Posterior cingulate gyrus (tissue), 11 donors: ENCODE measurements at regions of chr6 and their contacts with region 1.

Region 1: GRCh38 chr6:32195652-32195901 is 3.1 kb upstream of the GPSM3 start:
- DNase-seq: peak; percentile 100

Region 2: DNA sequence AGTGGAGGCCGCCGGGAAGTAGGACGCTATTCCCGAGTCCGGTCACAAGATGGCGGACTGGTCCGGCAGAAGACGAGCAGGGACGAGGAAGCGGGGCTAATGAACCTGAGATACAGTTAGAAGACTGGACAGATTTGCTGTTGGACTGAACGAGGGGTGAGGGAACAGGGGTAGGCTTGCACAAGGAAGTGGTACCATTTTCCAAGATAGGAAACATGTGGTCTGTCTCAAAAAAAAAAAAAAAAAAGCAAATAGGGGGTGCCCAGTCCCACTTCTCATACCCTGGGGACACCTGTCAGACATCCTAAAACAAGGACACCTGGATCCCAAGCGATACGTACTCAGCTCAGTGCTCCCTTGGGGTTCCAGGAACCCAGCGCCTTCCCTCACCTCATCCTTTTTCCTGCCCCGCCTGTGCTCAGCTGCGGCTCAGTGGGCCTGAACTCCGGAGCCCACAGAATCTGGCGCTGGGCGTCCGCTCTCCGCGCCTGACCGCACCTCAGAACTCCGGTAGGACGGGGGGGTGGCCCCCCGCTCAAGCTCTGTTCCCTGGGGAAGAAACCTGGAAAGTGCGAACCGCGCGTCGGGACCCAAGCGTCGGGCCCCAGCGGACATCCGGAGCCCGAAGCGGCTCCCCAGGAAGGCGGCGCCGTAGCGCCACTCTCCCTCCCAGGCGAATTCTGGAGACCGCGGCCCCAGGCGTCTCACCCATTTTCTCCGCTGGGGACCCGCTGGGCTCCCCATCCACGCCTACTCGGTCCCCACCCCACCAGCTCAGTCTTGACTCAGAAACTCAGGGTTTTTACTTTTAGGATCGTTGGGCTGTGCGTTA is 514.5 kb before region 1 on chr6 and contains the start of gene LY6G5C:
- intact Hi-C with region 1: no loop called
- DNase-seq: peak; percentile 65 to 97 (median 81)

Region 3: DNA sequence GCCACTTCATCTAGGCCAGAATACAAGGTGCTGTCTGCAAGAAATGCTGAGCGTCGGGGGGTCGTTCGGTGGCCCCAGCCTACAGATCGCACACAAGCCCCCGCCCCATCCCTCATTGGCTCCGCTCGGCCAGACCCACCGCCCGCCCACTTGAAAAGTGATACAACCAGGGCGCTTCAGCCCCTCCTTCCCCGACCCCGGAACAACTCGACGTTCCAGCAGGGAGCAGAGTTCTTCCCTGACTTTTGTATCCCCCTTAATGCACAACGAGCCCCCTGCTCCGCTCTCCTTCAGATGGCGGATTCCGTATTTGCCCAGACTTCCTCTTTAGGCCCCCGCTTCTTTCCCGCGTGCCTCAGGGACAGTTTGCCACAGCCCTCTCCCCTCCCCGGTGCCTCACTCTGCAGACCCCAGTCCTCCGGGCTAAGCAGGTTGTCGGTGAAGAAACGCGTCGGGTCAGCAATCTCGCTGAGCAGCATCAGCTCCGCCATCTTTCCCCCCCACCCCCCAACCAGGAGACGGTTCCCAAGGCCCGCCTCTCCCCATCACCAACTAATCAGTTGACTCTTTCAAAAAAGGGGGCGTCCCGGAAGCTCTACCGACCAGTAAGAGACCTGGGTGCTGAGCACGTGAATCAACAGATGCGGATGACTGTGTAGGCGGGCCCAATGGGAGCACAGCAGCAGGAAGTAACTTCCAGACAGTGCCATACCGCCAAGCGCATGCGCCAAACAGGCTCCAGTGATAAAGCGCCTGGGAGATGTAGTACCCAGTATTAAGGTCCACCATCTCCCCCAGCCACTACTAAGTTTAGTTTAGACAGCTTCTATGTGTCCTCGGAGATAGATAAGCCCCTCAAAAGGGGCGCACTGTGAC is 67.6 kb before region 1 on chr6 and contains the start of gene ATF6B:
- intact Hi-C with region 1: loop called (anchors 2 kb)
- DNase-seq: peak; percentile 97 to 100 (median 99)

Region 4: GRCh38 chr6:32153564-32154513 is 41.7 kb before region 1 on chr6 and contains the start of gene PPT2:
- intact Hi-C with region 1: loop called (anchors 2 kb)
- DNase-seq: peak; percentile 81 to 98 (median 90)

Region 5: GRCh38 chr6:32177788-32178546 is 17.6 kb before region 1 on chr6 and contains the start of gene RNF5:
- intact Hi-C with region 1: loop called (anchors 2 kb)
- DNase-seq: peak; percentile 86 to 99 (median 94)

Region 6: GRCh38 chr6:32244946-32245398 is 49.4 kb after region 1 on chr6:
- intact Hi-C with region 1: loop called (anchors 2 kb)
- DNase-seq: peak; percentile 51 to 97 (median 84)

Region 7: DNA sequence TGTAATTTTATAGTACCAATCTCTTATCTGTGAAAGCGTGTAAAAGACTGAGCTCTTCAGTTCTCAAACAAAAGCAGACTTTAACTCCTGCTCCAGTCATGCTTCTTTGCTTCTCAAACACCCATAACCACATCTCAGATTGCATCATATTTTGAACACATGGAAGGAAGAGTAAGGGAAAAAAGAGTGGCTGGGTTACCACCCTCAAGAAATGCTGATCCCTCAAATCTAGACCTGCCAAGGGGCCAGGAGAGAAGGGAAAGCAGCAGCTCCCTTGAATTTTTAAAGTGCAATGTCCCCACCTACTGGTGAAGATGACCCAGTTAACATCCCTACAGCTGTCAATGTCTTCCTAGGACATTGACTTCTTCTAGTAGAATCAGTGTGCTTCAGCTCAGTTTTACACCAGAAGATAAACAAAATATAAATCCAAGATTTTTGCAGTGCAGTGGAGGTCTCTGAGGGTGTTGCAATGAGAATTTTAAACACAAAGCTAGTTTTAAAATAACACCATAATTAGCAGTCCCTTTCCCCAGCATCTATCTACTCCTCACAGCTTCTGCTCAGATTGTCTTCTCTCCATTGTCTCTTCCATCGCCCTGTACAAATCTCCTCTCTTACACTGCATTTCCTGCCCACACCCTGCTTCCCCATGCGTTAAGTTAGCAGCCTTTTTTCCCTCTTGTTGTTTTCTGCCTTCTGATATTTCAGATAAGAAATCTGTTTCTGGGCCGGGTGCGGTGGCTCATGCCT is 590.4 kb after region 1 on chr6:
- intact Hi-C with region 1: no loop called
- DNase-seq: peak in 3 of 10 donors; percentile 11 to 20 (median 16)

Region 8: GRCh38 chr6:32838114-32838958 is 642.8 kb after region 1 on chr6 and contains the start of gene TAP2:
- intact Hi-C with region 1: no loop called
- DNase-seq: peak; percentile 90 to 99 (median 96)

Region 9: DNA sequence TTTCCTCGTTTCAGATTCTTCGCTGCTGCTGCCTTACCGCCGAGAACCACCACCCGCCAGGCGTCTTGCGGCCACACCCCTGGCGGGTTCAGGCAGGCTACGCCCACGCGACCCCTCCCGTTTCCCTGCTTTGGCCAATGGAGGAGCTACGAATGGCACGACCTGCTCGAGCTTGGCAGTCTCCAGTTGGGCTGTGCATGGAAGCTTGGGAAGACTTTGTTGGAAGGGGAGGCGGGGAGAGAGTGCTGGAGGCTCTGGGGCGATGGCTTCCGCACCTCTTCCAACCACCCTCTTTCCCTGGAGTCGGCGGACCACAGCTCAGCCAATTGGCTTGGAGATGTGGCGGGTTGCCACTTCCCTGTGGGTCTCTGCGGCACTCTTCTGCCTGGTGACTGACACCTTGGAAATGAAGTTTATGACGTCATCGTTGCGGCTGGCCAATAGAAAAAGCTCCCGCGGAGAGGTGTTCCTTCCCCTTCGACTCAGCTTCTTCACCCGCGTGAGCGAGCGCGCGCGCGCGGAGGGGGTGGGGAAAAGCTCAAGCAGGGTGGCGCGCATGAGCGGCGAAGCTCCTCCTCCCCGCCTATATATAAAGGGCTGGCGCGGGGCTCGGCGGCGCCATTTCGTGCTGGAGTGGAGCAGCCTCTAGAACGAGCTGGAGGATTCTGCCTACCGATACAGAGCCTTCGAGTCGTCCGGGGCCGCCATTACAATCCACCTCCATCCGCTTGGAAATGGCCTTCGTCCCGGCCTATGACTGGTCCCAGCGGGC is 776.2 kb after region 1 on chr6:
- intact Hi-C with region 1: loop called (anchors 5 kb)
- DNase-seq: peak; percentile 99 to 100 (median 99)

Region 10: GRCh38 chr6:33200219-33201146 is 1004.9 kb after region 1 on chr6 and contains the starts of genes RXRB and SLC39A7:
- intact Hi-C with region 1: loop called (anchors 5 kb)
- DNase-seq: peak; percentile 97 to 99 (median 98)